ENCODE measurements at regions of chr22 and their contacts with region 1.

Region 1: DNA sequence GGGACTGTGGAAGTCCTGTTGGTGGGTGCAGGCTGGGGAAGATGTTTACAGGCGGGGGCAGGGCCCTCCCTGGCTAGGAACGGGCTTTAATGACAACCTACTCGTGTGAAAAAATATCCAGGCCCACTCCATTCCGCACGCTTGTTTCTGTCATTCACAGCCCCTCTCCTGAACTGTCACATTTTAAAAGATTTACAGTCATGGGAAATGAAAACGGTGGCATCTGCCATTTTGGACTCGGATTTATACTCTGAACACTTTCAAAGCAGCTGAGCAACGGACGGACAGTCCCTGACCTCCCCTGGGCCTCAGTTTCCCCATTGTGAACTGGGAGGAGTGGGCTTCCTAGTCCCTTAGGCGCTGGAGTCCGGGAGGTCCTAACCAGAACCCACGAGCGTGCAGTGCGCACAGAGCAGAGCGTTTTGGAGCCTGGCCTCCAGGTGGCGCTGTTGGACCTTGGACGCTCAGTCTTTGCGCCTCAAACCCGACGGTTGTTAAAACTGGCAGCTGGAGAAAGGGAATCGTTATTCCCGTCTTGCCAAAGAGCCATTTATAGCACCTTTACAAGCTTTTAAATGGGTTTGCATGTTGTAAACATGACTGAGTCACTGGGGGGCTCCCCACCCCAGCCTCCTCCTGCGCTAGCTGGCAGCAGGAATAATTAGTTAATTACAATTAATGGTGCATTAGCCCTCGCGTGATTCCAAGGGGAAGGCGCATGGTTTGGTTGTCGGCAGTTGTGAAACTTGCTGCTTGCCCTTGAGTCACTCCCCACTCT is 75.3 kb downstream of the FBLN1 start:
- DNase-seq: peak; percentile 52 to 85 (median 76)
- ATAC-seq: peak; percentile 56
- H3K4me3 ChIP-seq: no peak overlapping the region
- H3K4me3 Mint-ChIP-seq: no peak overlapping the region
- H3K27ac ChIP-seq: no peak overlapping the region
- H3K27ac Mint-ChIP-seq: no peak overlapping the region
- H3K4me1 ChIP-seq: peaks cover under 1% of the 10 kb centered on the region
- H3K4me1 Mint-ChIP-seq: peaks cover 2% of the 10 kb centered on the region
- H3K27me3 ChIP-seq: peaks cover 0 to 3% of the 10 kb centered on the region in 2 experiments
- H3K27me3 Mint-ChIP-seq: peaks cover 9% of the 10 kb centered on the region
- CTCF ChIP-seq: peak; percentile 94

Region 2: DNA sequence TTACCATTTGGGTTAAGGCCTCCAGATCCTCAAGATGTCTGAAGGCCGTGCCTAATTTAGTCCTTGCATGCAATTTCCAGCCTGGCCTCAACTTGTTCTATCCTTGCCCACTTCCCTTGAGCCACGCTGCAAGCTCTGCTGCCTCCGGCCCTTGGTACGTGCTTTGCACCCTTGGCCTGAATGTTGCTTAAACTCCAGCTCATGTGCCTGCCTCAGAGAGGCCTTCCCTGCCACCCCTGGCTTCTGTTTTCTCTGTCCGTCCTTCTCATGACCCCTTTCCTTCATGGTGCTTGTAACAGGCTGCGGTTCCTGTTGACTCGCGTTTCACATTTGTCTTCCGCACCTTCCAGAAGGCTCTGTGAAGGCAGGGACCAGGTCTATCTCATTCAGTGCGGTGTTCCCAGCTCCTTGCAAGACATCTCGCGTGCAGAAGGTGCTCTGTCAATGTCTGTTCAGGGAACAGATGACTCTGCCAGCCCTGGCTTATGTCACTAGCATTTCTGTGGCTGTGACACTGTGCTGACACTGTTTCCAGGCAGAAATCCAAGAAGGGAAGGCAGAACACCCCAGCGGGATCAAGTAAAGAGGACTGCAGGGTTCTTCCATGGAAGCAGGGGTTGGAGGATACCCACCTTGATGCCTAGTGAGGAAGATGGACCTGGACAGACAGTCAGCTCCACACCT is 13.4 kb before region 1 on chr22:
- CTCF ChIA-PET with region 1: interaction called, 27 read pairs
- POLR2A ChIA-PET with region 1: no interaction called
- intact Hi-C with region 1: no loop called
- DNase-seq: no peak
- ATAC-seq: no peak
- H3K4me3 ChIP-seq: no peak overlapping the region
- H3K4me3 Mint-ChIP-seq: no peak overlapping the region
- H3K27ac ChIP-seq: no peak overlapping the region
- H3K27ac Mint-ChIP-seq: no peak overlapping the region
- H3K4me1 ChIP-seq: no peaks in the 10 kb centered on the region
- H3K4me1 Mint-ChIP-seq: no peaks in the 10 kb centered on the region
- H3K27me3 ChIP-seq: no peaks in the 10 kb centered on the region
- H3K27me3 Mint-ChIP-seq: peaks cover 27% of the 10 kb centered on the region
- CTCF ChIP-seq: no peak

Region 3: GRCh38 chr22:46116491-46116958 is 538.6 kb after region 1 on chr22:
- CTCF ChIA-PET with region 1: interaction called, 3 read pairs
- POLR2A ChIA-PET with region 1: no interaction called
- intact Hi-C with region 1: loop called in 1 of 2 experiments (anchors 1 kb)
- DNase-seq: peak; percentile 70 to 90 (median 88)
- ATAC-seq: peak; percentile 97
- H3K4me3 ChIP-seq: no peak overlapping the region
- H3K4me3 Mint-ChIP-seq: no peak overlapping the region
- H3K27ac ChIP-seq: no peak overlapping the region
- H3K27ac Mint-ChIP-seq: no peak overlapping the region
- H3K4me1 ChIP-seq: peaks cover 5% of the 10 kb centered on the region
- H3K4me1 Mint-ChIP-seq: no peaks in the 10 kb centered on the region
- H3K27me3 ChIP-seq: no peaks in the 10 kb centered on the region
- H3K27me3 Mint-ChIP-seq: no peaks in the 10 kb centered on the region
- CTCF ChIP-seq: peak; percentile 70

Measured in CD8-positive, alpha-beta T cell (primary cell).